Gastrocnemius medialis (tissue), 4 donors: ENCODE measurements at regions of chr1 and their contacts with region 1.

Region 1: DNA sequence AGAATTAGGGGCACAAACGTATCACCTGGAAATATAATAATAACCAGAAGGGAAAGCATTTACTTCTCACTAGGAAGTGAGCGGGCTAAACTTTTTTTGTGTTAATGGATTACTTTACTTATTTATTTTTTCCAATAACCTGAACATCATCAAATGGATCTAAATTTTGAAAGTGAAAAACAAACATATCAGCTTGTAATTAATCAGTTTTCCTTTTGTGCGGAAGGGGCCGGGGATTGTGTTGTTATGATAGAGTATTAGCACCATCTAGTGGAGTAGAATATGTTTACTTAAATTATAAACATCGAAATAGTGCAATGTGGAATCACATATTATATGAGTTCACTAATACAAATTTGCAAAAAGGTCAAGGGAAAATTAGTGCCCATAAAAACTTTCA is 9.0 kb downstream of the CFH start:
- DNase-seq: no peak
- ATAC-seq: peak; percentile 39 to 62
- H3K4me3 ChIP-seq: peak overlapping the region in 3 of 4 donors; percentile 10 to 26 (median 12)
- H3K27ac ChIP-seq: no peak overlapping the region
- H3K4me1 ChIP-seq: no peaks in the 10 kb centered on the region
- H3K27me3 ChIP-seq: no peaks in the 10 kb centered on the region
- CTCF ChIP-seq: peak; percentile 48 to 57 (median 54)
- POLR2A ChIP-seq: no peak

Region 2: GRCh38 chr1:196148367-196148970 is 512.4 kb before region 1 on chr1:
- in situ Hi-C with region 1: loop called (anchors 5 to 25 kb)
- intact Hi-C with region 1: no loop called
- DNase-seq: no peak
- ATAC-seq: no peak
- H3K4me3 ChIP-seq: no peak overlapping the region
- H3K27ac ChIP-seq: no peak overlapping the region
- H3K4me1 ChIP-seq: no peaks in the 10 kb centered on the region
- H3K27me3 ChIP-seq: no peaks in the 10 kb centered on the region
- CTCF ChIP-seq: peak in 3 of 5 experiments; percentile 13 to 47 (median 45)
- POLR2A ChIP-seq: no peak

Region 3: DNA sequence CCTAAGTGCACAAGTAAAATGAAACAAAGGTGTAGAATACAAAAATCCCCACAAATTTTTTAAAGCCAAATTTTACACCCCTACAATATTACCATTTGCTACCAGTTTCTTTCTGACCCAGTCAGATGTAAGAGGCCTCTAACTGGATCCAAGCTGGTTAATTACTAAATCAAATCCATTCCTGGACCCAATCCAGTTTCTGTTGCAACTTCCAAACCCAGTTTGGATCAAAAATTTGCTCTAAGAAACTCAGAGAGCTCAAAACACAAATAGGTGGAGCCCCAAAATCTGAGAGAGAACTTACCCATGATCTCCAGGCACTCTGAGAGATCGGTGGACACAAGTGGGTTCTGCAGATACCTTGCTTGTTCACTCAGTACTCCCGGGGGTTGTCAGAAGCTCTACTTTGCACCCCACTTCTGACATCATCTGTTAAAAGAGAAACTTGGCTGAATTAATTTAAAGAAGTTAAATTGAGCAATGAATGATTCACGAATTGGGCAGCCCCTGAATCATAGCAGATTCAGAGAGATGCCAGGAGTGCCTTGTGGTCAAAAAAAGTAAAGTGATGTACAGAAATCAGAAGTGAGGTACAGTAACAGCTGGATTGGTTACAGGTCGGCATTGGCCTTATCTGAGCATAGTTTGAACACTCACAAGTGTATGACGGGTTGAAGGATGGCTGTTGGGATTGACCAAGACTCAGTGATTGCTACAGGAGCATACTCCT is 500.6 kb before region 1 on chr1:
- in situ Hi-C with region 1: loop called in 2 of 4 experiments (anchors 10 to 25 kb)
- intact Hi-C with region 1: no loop called
- DNase-seq: no peak
- ATAC-seq: no peak
- H3K4me3 ChIP-seq: no peak overlapping the region
- H3K27ac ChIP-seq: no peak overlapping the region
- H3K4me1 ChIP-seq: no peaks in the 10 kb centered on the region
- H3K27me3 ChIP-seq: no peaks in the 10 kb centered on the region
- CTCF ChIP-seq: no peak
- POLR2A ChIP-seq: no peak

Region 4: DNA sequence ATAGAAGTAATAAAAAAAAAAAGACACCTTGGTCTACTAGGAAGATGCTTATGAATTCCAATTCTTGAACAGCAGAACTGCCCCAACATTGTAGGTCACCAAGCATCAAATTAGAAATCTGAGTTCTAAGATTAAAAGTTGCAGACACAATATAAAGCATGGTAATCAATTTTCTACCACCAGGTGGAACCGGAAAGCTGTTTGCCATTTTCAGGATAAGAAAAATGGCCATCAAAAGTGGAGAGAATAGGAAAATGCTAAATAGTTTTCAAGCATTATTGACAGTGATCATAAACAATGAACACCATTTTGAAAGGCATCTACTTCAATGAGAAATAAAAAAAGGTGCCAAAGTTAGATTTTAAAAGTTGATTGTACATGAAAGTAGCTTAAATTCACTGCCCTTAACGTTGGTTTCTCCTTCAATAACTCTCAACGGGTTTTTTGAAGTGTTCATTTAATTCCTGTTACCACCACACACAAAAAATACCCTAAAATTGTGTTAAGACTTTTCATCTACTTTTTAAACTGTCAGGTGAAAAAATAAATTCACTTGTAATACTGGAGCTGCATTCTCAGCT is 305.6 kb before region 1 on chr1:
- in situ Hi-C with region 1: loop called in 2 of 4 experiments (anchors 10 to 25 kb)
- intact Hi-C with region 1: loop called (anchors 10 kb)
- DNase-seq: no peak
- ATAC-seq: no peak
- H3K4me3 ChIP-seq: no peak overlapping the region
- H3K27ac ChIP-seq: no peak overlapping the region
- H3K4me1 ChIP-seq: no peaks in the 10 kb centered on the region
- H3K27me3 ChIP-seq: no peaks in the 10 kb centered on the region
- CTCF ChIP-seq: peak in 2 of 5 experiments; percentile 7 to 15
- POLR2A ChIP-seq: no peak

Region 5: GRCh38 chr1:196372896-196373536 is 287.8 kb before region 1 on chr1:
- in situ Hi-C with region 1: loop called in 1 of 4 experiments (anchors 25 kb)
- intact Hi-C with region 1: no loop called
- DNase-seq: no peak
- ATAC-seq: no peak
- H3K4me3 ChIP-seq: no peak overlapping the region
- H3K27ac ChIP-seq: no peak overlapping the region
- H3K4me1 ChIP-seq: no peaks in the 10 kb centered on the region
- H3K27me3 ChIP-seq: no peaks in the 10 kb centered on the region
- CTCF ChIP-seq: peak in 3 of 5 experiments; percentile 16 to 48 (median 19)
- POLR2A ChIP-seq: no peak

Region 6: DNA sequence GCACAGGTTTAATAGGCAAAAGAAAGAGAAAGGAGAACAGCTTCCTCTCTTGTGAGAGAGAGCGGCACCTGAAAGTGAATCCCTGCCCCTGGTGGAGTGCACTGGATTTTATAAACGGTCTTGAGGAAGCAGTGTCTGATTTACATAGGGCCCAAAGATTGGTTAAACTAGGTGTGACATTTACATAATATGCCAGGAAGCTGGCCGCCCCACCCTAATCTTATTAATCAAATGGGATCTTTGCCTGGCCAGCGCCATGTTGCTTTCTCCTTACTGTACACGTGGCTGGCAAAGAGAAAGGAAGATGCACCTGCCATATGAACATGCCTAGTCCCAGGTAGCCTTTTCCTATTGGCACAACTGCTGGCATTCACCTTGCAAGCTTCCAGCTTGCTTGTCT is 29.8 kb after region 1 on chr1:
- in situ Hi-C with region 1: no loop called
- intact Hi-C with region 1: no loop called
- DNase-seq: no peak
- ATAC-seq: no peak
- H3K4me3 ChIP-seq: no peak overlapping the region
- H3K27ac ChIP-seq: no peak overlapping the region
- H3K4me1 ChIP-seq: no peaks in the 10 kb centered on the region
- H3K27me3 ChIP-seq: no peaks in the 10 kb centered on the region
- CTCF ChIP-seq: no peak
- POLR2A ChIP-seq: no peak